Activated naive CD8-positive, alpha-beta T cell treated with anti-CD3 and anti-CD28 coated beads, Interleukin-2, amount 10 ng/mL, durations not matched to agents 7 days and 5 days (primary cell): ENCODE measurements at regions of chr1 and their contacts with region 1.

Region 1: DNA sequence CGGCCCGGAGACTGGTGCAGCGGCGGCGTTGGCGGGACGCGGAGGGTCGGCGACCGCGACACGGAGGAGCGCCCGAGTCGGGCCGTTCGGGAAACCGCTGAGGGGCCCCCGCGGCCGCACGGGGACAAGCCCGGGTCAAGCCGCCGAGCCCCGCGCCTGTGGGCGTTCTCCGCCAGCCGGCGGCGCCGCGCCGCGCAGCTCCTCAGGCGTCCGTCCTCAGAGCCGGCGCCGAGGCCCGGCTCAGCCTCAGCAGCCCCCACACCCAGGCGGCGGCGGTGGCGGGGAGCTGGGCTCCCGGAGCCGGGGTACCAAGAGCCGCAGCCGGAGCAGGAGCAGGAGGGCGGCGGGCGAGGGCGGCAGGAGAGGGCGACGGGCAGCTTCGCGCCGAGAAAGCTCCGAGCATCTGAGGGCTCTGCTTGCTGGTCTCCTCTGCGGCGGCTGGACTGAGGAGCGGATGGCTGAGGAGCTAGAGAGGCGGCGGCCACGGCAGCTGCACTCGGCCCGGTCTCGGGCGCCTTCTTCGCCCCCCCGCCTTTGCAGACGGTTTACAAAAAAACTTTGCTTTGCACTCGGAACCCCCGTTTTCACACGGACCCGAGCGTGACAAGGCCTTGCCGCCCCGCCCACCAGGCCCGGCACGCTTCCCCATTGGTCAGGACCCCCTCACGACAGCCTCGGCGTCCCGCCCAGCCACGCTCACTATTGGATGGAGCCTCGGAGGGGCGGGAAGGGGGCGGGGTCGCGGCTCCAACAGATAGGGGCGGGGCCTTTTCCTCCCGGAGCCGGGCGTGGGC is at the start of gene SLC30A1:
- DNase-seq: peak; percentile 100
- ATAC-seq: peak; percentile 87
- H3K4me3 Mint-ChIP-seq: peak within 1 kb of the TSS; percentile 88
- H3K27ac Mint-ChIP-seq: peak within 1 kb of the TSS; percentile 91
- H3K4me1 Mint-ChIP-seq: peaks cover 48% of the 10 kb centered on the region
- H3K27me3 Mint-ChIP-seq: no peaks in the 10 kb centered on the region
- total RNA-seq, gene SLC30A1: 11.9 to 13.2 TPM

Region 2: DNA sequence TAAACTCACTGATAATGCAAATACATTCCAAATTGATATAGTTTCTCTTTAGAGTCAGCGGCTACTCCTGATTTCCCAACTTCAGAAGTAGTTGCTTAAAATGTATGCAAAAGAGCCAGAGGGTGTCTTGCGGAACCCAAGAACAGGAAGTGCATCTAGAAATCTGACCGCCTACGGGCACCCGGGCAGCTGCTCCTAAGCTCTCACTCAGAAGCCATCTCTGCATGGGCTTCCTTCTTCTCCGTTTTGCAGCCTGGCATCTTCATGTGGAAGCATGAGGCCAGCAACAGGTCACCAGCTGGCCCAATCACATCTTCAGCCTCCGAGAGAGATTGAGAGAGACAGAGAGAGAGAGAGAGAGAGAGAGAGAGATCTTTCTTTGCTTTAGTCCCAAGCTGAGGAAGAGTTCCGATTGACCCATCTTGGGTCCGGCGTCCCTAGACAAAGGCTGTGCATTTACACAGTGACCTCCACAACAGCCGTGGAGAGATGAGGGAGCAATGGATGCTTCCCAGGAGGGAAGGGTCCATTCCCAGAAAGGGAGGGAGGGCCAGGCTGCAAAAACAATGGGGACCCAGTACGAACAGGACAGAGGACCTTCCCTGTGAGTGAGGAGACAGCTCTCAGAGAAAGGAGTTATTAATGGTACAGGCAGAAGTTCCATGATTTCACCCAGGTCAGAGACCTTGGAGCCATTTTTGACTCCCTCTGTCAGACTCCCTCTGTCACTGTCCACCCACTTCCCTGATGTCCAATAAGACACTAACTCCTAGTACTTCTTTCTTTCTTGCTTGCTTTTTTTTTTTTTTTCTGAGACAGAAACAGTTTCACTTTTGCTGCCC is 28.3 kb after region 1 on chr1:
- POLR2A ChIA-PET with region 1: interaction called, 12 read pairs
- DNase-seq: no peak
- ATAC-seq: peak; percentile 84
- H3K4me3 Mint-ChIP-seq: peak overlapping the region; percentile 78
- H3K27ac Mint-ChIP-seq: peak overlapping the region; percentile 91
- H3K4me1 Mint-ChIP-seq: peaks cover 25% of the 10 kb centered on the region
- H3K27me3 Mint-ChIP-seq: peaks cover 14% of the 10 kb centered on the region

Region 3: DNA sequence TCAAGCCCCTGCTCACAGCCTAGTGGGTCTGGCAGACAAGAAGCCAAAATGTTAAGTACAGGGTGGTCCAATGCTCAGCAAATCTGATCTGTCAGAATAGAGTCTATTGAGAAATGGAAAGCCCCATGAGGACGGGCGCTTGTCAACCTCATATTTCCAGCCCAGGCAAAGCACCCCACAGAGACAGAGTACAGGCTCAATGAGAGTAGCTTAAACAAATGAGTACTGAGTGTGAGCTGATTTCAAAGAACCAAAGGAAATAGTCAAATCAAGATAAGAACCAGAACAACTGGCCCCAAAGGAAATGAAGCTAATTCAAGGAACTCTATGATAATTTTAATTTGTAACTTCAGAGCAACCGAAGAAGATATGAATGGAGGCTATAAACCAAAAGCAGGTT is 44.7 kb after region 1 on chr1:
- POLR2A ChIA-PET with region 1: interaction called, 13 read pairs
- DNase-seq: no peak
- ATAC-seq: peak; percentile 74
- H3K4me3 Mint-ChIP-seq: peak overlapping the region; percentile 26
- H3K27ac Mint-ChIP-seq: peak overlapping the region; percentile 68
- H3K4me1 Mint-ChIP-seq: peaks cover 22% of the 10 kb centered on the region
- H3K27me3 Mint-ChIP-seq: peaks cover 2% of the 10 kb centered on the region